CD4-positive, alpha-beta T cell (primary cell): ENCODE measurements at regions of chr17 and their contacts with region 1.

Region 1: DNA sequence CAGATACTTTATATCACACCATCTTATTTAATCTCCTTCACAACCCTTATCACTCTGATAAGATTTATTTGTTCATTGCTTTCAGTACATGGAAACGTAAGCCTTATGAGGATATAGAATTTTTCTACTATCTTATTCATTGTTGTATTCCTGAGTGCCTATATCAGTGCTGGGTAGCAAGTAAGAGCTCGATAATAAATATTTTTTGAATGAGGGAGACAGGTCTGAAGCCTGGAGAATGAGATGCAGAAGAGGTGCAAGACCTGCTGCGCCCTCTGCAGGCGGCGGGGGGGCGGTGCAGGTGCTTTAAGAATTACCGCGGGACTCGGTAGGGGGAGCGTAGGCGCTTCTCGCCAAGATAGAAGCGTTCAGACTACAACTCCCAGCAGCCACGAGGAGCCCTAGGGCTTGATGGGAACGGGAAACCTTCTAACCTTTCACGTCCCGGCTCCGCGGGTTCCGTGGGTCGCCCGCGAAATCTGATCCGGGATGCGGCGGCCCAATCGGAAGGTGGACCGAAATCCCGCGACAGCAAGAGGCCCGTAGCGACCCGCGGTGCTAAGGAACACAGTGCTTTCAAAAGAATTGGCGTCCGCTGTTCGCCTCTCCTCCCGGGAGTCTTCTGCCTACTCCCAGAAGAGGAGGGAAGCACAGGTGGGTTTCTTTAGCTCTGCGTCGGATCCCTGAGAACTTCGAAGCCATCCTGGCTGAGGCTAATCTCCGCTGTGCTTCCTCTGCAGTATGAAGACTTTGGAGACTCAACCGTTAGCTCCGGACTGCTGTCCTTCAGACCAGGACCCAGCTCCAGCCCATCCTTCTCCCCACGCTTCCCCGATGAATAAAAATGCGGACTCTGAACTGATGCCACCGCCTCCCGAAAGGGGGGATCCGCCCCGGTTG is at the start of gene WRAP53:
- DNase-seq: peak; percentile 93 to 98 (median 95)
- ATAC-seq: peak; percentile 75
- H3K4me3 ChIP-seq: peak within 1 kb of the TSS; percentile 72
- H3K4me3 Mint-ChIP-seq: peak within 1 kb of the TSS; percentile 99
- H3K27ac ChIP-seq: peak within 1 kb of the TSS; percentile 96 to 98
- H3K27ac Mint-ChIP-seq: peak within 1 kb of the TSS; percentile 100
- H3K4me1 ChIP-seq: peaks cover 38% of the 10 kb centered on the region
- H3K4me1 Mint-ChIP-seq: peaks cover 46% of the 10 kb centered on the region
- H3K27me3 ChIP-seq: no peaks in the 10 kb centered on the region
- H3K27me3 Mint-ChIP-seq: peaks cover 7% of the 10 kb centered on the region
- CTCF ChIP-seq: peak; percentile 100
- total RNA-seq, gene WRAP53: 3.9 to 4.0 TPM

Region 2: DNA sequence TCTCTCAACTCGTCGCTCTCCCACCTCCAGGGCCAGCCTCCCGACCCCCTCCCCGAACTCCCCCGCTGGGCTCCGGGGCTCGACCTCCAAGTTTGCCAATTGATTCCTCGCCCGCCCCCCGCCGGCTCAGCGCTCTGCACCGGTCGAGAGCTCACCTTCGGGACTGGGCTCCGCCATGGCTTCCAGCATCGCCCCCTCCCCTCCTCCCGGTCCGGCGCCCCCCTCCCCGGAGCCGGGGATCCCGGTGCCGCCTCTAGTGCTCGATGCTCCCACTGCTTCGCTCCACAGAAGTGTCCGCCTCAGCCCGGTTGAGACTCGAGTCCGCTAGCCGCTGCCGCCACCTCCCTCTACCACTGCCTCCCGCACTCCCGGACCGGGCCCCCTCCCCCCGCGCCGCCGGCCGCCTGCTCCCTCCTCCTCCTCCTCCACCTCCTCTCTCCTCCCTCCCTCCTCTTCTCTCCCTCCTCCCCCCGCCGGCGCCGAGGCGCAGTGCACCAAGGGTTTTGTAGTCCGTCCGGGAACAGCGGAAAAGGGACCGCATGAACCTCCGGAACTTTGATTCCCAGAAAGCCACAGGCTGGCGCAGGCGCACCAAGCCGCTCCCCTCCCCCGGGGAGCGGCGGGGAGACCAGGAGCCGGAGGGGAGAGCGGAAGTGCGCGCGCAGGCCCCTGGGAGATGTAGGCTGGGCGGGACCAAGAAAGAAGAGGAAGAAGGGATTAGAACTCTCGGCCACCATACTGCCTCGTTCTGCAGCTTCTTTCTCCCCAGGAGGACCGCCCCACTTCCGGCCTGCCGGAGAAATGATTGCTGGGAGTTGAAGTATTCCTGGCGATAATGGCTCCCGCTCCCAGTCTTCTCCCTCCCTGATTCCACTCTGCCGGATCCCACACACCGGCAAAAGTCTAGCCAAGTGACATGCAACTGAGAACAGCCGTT is 448.8 kb before region 1 on chr17 and contains the start of gene PHF23:
- CTCF ChIA-PET with region 1: interaction called, 3 read pairs
- POLR2A ChIA-PET with region 1: interaction called, 16 read pairs
- intact Hi-C with region 1: no loop called
- DNase-seq: peak; percentile 92 to 99 (median 97)
- ATAC-seq: peak; percentile 66
- H3K4me3 ChIP-seq: peak within 1 kb of the TSS; percentile 93
- H3K4me3 Mint-ChIP-seq: peak within 1 kb of the TSS; percentile 94
- H3K27ac ChIP-seq: peak within 1 kb of the TSS; percentile 88
- H3K27ac Mint-ChIP-seq: peak within 1 kb of the TSS; percentile 93
- H3K4me1 ChIP-seq: peaks cover 63% of the 10 kb centered on the region
- H3K4me1 Mint-ChIP-seq: peaks cover 58% of the 10 kb centered on the region
- H3K27me3 ChIP-seq: no peaks in the 10 kb centered on the region
- H3K27me3 Mint-ChIP-seq: peaks cover 4% of the 10 kb centered on the region
- CTCF ChIP-seq: no peak
- total RNA-seq, gene PHF23: 4.5 to 5.1 TPM

Region 3: DNA sequence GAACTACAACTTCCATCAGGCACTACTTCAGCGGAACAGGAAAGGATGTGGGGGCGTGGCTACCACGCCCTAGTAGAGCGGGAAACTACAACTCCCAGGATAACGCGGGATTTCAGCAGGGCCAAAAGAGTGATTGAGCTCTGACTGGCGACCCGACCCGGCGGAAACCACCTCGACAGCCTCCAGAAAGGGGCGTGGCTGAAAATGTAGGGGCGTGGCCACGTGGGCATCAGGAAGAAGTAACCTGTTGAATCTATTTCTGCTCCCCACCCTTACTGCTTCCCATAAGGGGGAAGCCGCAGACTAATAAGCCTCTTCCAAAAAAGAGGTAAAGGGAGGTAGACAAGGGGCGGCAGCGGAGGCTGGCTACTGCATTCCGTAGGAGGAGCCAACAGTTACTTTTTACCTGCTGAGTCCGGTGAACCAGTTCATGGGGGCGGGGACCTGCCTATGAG is 252.9 kb before region 1 on chr17 and contains the start of gene TMEM102:
- CTCF ChIA-PET with region 1: interaction called, 6 read pairs
- POLR2A ChIA-PET with region 1: interaction called, 92 read pairs
- intact Hi-C with region 1: loop called in 1 of 2 experiments (anchors 1 kb)
- DNase-seq: peak; percentile 96 to 100 (median 98)
- ATAC-seq: peak; percentile 82
- H3K4me3 ChIP-seq: peak within 1 kb of the TSS; percentile 86
- H3K4me3 Mint-ChIP-seq: peak within 1 kb of the TSS; percentile 87
- H3K27ac ChIP-seq: peak within 1 kb of the TSS; percentile 83 to 93
- H3K27ac Mint-ChIP-seq: peak within 1 kb of the TSS; percentile 87
- H3K4me1 ChIP-seq: peaks cover 51% of the 10 kb centered on the region
- H3K4me1 Mint-ChIP-seq: peaks cover 41% of the 10 kb centered on the region
- H3K27me3 ChIP-seq: peaks cover 16 to 21% of the 10 kb centered on the region in 2 experiments
- H3K27me3 Mint-ChIP-seq: peaks cover 16% of the 10 kb centered on the region
- CTCF ChIP-seq: no peak
- total RNA-seq, gene TMEM102: 6.8 to 7.1 TPM

Region 4: DNA sequence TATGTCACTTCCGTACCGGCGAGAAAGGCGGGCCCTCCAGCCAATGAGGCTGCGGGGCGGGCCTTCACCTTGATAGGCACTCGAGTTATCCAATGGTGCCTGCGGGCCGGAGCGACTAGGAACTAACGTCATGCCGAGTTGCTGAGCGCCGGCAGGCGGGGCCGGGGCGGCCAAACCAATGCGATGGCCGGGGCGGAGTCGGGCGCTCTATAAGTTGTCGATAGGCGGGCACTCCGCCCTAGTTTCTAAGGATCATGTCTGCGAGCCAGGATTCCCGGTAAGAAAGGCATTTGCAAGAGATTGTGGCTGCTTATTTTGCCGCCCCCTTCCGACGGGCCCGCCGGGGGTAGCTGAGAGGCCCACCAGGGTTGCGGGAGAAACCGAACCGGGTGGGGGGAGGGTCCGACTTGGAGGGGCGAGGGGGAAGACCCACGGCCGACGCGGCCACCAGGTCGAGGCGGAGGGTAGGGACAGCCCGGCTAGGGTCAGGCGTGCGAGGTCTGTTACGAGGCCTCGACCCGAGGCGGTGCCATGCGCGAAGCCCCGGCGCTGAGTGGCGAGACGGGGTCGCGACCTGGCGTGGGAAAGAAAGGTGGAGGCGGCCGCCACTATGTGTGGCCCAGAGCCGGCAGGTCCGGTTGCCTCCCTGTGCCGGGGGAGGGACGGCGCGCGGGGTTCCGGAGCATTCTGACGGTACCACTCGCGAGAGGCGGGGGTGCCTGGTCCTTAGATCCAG is 115.4 kb before region 1 on chr17:
- CTCF ChIA-PET with region 1: interaction called, 15 read pairs
- POLR2A ChIA-PET with region 1: interaction called, 87 read pairs
- intact Hi-C with region 1: loop called in 1 of 2 experiments (anchors 2 kb)
- DNase-seq: peak; percentile 99 to 100 (median 100)
- ATAC-seq: peak; percentile 83
- H3K4me3 ChIP-seq: peak overlapping the region; percentile 100
- H3K4me3 Mint-ChIP-seq: peak overlapping the region; percentile 99
- H3K27ac ChIP-seq: peak overlapping the region; percentile 96 to 98
- H3K27ac Mint-ChIP-seq: peak overlapping the region; percentile 99
- H3K4me1 ChIP-seq: peaks cover 50% of the 10 kb centered on the region
- H3K4me1 Mint-ChIP-seq: peaks cover 52% of the 10 kb centered on the region
- H3K27me3 ChIP-seq: no peaks in the 10 kb centered on the region
- H3K27me3 Mint-ChIP-seq: peaks cover 3% of the 10 kb centered on the region
- CTCF ChIP-seq: no peak

Region 5: DNA sequence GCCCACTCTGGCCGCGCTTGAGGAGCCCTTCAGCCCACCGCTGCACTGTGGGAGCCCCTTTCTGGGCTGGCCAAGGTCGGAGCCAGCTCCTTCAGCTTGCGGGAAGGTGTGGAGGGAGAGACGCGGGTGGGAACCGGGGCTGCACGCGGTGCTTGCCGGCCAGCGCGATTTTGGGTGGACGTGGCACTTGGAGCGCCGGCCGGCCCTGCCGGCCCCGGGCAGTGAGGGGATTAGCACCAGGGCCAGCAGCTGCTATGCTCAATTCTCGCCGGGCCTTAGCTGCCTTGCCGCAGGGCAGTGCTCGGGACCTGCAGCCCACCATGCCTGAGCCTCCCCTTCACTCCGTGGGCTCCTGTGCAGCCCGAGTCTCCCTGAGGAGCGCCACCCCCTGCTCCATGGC is 47.4 kb before region 1 on chr17:
- CTCF ChIA-PET with region 1: no interaction called
- POLR2A ChIA-PET with region 1: interaction called, 48 read pairs
- intact Hi-C with region 1: no loop called
- DNase-seq: no peak
- ATAC-seq: no peak
- H3K4me3 ChIP-seq: no peak overlapping the region
- H3K4me3 Mint-ChIP-seq: no peak overlapping the region
- H3K27ac ChIP-seq: no peak overlapping the region
- H3K27ac Mint-ChIP-seq: no peak overlapping the region
- H3K4me1 ChIP-seq: peaks cover 7% of the 10 kb centered on the region
- H3K4me1 Mint-ChIP-seq: peaks cover 17% of the 10 kb centered on the region
- H3K27me3 ChIP-seq: peaks cover 0 to 4% of the 10 kb centered on the region in 2 experiments
- H3K27me3 Mint-ChIP-seq: peaks cover 5% of the 10 kb centered on the region
- CTCF ChIP-seq: no peak

Region 6: GRCh38 chr17:7856883-7857723 is 168.9 kb after region 1 on chr17 and contains the start of gene NAA38:
- CTCF ChIA-PET with region 1: interaction called, 3 read pairs
- POLR2A ChIA-PET with region 1: interaction called, 24 read pairs
- intact Hi-C with region 1: no loop called
- DNase-seq: peak; percentile 86 to 99 (median 91)
- ATAC-seq: peak; percentile 82
- H3K4me3 ChIP-seq: peak within 1 kb of the TSS; percentile 74
- H3K4me3 Mint-ChIP-seq: no peak within 1 kb of the TSS
- H3K27ac ChIP-seq: peak within 1 kb of the TSS; percentile 84 to 96
- H3K27ac Mint-ChIP-seq: no peak within 1 kb of the TSS
- H3K4me1 ChIP-seq: peaks cover 39% of the 10 kb centered on the region
- H3K4me1 Mint-ChIP-seq: peaks cover under 1% of the 10 kb centered on the region
- H3K27me3 ChIP-seq: no peaks in the 10 kb centered on the region
- H3K27me3 Mint-ChIP-seq: no peaks in the 10 kb centered on the region
- CTCF ChIP-seq: no peak
- total RNA-seq, gene NAA38: 15.4 to 16.3 TPM